Left cardiac atrium (tissue), 4 donors: ENCODE measurements at regions of chr7 and their contacts with region 1.

Region 1: GRCh38 chr7:101815835-101816493 is 1.5 kb upstream of the CUX1 start:
- DNase-seq: peak; percentile 80
- ATAC-seq: peak; percentile 71 to 82

Region 2: GRCh38 chr7:101743241-101743994 is 72.5 kb before region 1 on chr7:
- intact Hi-C with region 1: loop called (anchors 5 kb)
- DNase-seq: peak; percentile 55
- ATAC-seq: peak; percentile 58 to 81

Region 3: GRCh38 chr7:101856473-101857357 is 40.8 kb after region 1 on chr7:
- intact Hi-C with region 1: loop called in 1 of 2 experiments (anchors 5 kb)
- DNase-seq: peak; percentile 90
- ATAC-seq: peak; percentile 94 to 95

Region 4: GRCh38 chr7:102230593-102230992 is 414.6 kb after region 1 on chr7:
- intact Hi-C with region 1: loop called in 1 of 2 experiments (anchors 5 kb)
- DNase-seq: no peak
- ATAC-seq: no peak